ENCODE measurements at regions of chr1 and their contacts with region 1.

Region 1: DNA sequence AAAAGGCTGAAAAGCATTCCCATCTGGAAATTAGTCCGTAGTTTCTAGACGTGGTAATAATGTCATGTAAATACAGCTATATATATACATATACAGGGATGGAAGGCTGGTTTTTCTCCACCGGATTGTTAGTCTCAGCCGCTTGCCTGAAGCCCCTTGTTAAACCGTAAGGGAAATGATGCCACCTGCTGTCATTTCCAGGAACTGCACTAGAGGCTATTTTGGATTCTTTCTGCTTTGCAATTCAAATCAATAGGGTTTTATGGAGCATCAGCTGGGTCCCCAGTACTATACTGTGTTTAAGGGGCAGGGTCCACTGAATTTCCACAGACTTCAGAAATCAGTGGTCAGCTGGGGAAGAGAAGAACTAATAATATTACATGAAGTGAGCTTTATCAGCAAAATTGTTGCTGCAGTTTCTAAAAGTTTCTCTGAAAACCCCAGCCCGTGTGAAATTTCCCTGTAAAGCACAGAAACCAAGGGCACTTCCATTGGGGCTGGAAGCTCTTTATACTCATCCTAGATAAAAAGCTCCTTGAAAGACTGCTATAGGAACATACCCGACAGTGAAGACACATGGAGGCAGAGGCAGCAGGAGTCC is 33.8 kb upstream of the MPZL1 start:
- DNase-seq: peak in 1 of 2 donors; percentile 91
- H3K4me3 ChIP-seq: no peak overlapping the region
- H3K27ac ChIP-seq: no peak overlapping the region
- H3K4me1 ChIP-seq: peaks cover 7 to 12% of the 10 kb centered on the region in 2 donors
- H3K27me3 ChIP-seq: no peaks in the 10 kb centered on the region
- CTCF ChIP-seq: peak; percentile 80 to 94 (median 94)

Region 2: GRCh38 chr1:167454894-167455785 is 232.9 kb before region 1 on chr1:
- intact Hi-C with region 1: loop called (anchors 10 kb)
- DNase-seq: peak in 1 of 2 donors; percentile 84
- H3K4me3 ChIP-seq: peak overlapping the region; percentile 82 to 96
- H3K27ac ChIP-seq: peak overlapping the region; percentile 88 to 91
- H3K4me1 ChIP-seq: peaks cover 0 to 4% of the 10 kb centered on the region in 2 donors
- H3K27me3 ChIP-seq: no peaks in the 10 kb centered on the region
- CTCF ChIP-seq: no peak

Region 3: DNA sequence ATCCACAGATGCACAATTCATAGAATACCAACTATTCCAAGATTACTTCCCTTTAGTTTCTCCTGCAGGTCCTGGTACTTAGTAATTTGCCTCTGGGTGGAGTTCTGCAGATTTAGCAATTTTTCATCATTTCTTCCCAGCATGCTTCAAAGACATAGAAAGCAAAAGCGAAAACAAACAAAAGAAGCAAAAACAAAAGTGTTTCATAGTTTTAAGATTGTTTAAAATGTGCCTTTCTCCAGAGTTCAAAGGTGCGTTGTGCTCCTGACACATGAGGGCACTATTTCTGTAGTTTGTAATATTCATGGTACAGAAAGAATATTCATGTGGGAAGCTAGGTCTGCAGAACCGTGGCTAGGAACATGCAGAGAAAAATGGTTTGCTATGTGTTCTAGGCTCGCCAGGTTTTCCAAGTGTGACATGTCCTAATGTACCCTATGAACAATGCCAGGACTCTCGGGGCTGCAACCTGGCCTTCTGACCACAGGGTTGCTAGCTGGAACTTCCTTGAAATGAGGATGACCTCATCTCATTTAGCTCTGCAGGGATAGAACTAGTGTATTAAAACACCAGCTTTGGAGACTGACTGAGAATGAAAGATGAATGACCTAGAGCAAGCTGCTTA is 88.0 kb before region 1 on chr1:
- intact Hi-C with region 1: loop called (anchors 1 kb)
- DNase-seq: no peak
- H3K4me3 ChIP-seq: no peak overlapping the region
- H3K27ac ChIP-seq: no peak overlapping the region
- H3K4me1 ChIP-seq: no peaks in the 10 kb centered on the region
- H3K27me3 ChIP-seq: no peaks in the 10 kb centered on the region
- CTCF ChIP-seq: peak; percentile 37 to 62 (median 38)

Measured in ascending aorta (tissue), 2 donors.